ENCODE measurements at regions of chr2 and their contacts with region 1.

Region 1: GRCh38 chr2:197113275-197113711 is 186.8 kb upstream of the PGAP1 start:
- DNase-seq: no peak
- H3K4me3 ChIP-seq: no peak overlapping the region
- H3K27ac ChIP-seq: no peak overlapping the region
- H3K4me1 ChIP-seq: no peaks in the 10 kb centered on the region
- H3K27me3 ChIP-seq: no peaks in the 10 kb centered on the region
- CTCF ChIP-seq: peak in 2 of 3 experiments; percentile 29 to 35; a peak in 2 of 4 replicates
- EP300 ChIP-seq: no peak
- POLR2A ChIP-seq: no peak
- RAD21 ChIP-seq: peak; percentile 62 to 67

Region 2: DNA sequence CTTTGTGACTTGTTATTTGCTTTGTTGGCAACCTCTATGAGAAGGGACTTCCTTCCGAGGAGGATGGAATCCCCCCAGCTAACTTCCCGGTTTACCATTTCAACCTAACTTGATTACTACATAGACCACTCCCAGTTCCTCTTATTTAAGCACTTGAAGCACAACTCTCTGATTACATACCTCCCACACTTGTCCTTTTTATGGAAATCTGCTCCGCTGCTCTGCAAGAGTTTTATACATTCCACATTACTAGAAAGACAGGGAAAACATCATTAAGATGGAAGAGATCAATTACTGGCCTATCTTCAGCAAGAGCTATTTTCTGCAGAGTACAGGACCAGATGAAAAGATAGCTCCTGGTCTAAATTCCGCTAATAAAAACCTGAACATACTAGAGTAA is 26.8 kb before region 1 on chr2:
- CTCF ChIA-PET with region 1: interaction called, 12 read pairs
- POLR2A ChIA-PET with region 1: no interaction called
- DNase-seq: no peak
- H3K4me3 ChIP-seq: no peak overlapping the region
- H3K27ac ChIP-seq: no peak overlapping the region
- H3K4me1 ChIP-seq: no peaks in the 10 kb centered on the region
- H3K27me3 ChIP-seq: no peaks in the 10 kb centered on the region
- CTCF ChIP-seq: no peak
- EP300 ChIP-seq: no peak
- POLR2A ChIP-seq: no peak
- RAD21 ChIP-seq: no peak

Region 3: DNA sequence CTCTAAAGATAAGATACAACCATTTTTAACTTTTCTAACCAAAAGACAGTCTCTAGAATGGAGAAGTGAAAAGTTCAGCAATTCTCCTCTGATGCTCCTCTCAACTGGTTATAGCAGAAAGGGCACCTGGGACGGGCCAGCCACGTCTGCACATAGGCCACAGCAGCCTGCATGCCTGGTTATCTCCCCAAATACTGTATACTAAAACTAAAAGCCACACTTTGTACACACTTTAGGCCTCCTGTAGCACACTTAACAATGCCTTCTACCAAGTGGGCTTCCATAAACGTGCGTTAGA is 18.2 kb after region 1 on chr2:
- CTCF ChIA-PET with region 1: interaction called, 51 read pairs
- POLR2A ChIA-PET with region 1: no interaction called
- DNase-seq: no peak
- H3K4me3 ChIP-seq: no peak overlapping the region
- H3K27ac ChIP-seq: no peak overlapping the region
- H3K4me1 ChIP-seq: 0 out of 7 replicates have a peak, but pooled peaks cover 0 to 3% (median 0%) of the 10 kb centered on the region in 4 experiments
- H3K27me3 ChIP-seq: no peaks in the 10 kb centered on the region
- CTCF ChIP-seq: no peak
- EP300 ChIP-seq: no peak
- POLR2A ChIP-seq: no peak
- RAD21 ChIP-seq: no peak

Region 4: GRCh38 chr2:197152451-197153228 is 39.3 kb after region 1 on chr2:
- CTCF ChIA-PET with region 1: interaction called, 24 read pairs
- POLR2A ChIA-PET with region 1: interaction called, 5 read pairs
- DNase-seq: no peak
- H3K4me3 ChIP-seq: no peak overlapping the region
- H3K27ac ChIP-seq: no peak overlapping the region
- H3K4me1 ChIP-seq: peaks cover 0 to 3% (median 1%) of the 10 kb centered on the region in 4 experiments; a peak in 3 of 7 replicates
- H3K27me3 ChIP-seq: no peaks in the 10 kb centered on the region
- CTCF ChIP-seq: no peak
- EP300 ChIP-seq: no peak
- POLR2A ChIP-seq: no peak
- RAD21 ChIP-seq: no peak

Region 5: DNA sequence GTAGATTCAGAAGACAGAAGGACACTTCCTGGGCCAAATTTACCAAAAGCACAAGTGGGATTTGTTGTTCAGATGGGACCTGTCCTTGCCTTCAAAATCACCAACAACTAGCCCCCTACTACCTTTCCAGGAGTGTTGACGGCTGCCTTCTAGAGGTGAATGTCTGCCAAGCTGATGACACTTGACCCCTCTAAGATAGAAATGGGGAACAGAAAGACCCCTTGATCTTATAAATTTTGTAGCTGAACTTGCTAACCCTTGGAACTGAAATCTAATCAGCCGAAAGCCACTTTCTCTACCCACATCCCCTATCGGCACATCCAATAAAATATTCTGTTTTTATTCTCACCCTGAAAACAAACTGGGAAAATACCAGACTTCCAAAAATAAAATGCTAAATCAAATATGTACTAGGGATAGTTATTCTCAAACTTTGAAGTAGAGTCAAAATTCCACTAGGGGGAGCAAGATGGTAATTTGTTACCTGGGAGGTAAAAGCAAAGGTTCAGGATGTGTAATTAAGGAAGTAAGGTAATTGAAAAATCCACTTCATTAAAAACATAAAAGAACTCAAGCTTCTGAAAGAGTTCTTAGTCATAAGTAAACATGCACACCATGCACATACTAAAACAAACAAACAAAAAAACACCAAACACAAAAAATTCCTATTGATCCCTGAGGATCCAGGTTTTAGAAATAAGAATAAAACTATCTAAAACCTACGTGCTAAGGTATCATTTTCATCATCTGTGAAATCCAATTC is 78.1 kb after region 1 on chr2:
- CTCF ChIA-PET with region 1: interaction called, 18 read pairs
- POLR2A ChIA-PET with region 1: no interaction called
- DNase-seq: no peak
- H3K4me3 ChIP-seq: no peak overlapping the region
- H3K27ac ChIP-seq: no peak overlapping the region
- H3K4me1 ChIP-seq: peaks cover 0 to 6% (median 2%) of the 10 kb centered on the region in 4 experiments; a peak in 1 of 7 replicates
- H3K27me3 ChIP-seq: no peaks in the 10 kb centered on the region
- CTCF ChIP-seq: peak in 2 of 3 experiments; percentile 36 to 45; a peak in 2 of 4 replicates
- EP300 ChIP-seq: no peak
- POLR2A ChIP-seq: no peak
- RAD21 ChIP-seq: peak; percentile 59 to 68

Region 6: GRCh38 chr2:197556456-197556855 is 443.2 kb after region 1 on chr2:
- CTCF ChIA-PET with region 1: no interaction called
- POLR2A ChIA-PET with region 1: no interaction called
- DNase-seq: no peak
- H3K4me3 ChIP-seq: no peak overlapping the region
- H3K27ac ChIP-seq: no peak overlapping the region
- H3K4me1 ChIP-seq: no peaks in the 10 kb centered on the region
- H3K27me3 ChIP-seq: no peaks in the 10 kb centered on the region
- CTCF ChIP-seq: no peak
- EP300 ChIP-seq: no peak
- POLR2A ChIP-seq: no peak
- RAD21 ChIP-seq: no peak

Measured in H1 (cell line).